SK-N-SH (cell line): ENCODE measurements at regions of chr11 and their contacts with region 1.

Region 1: DNA sequence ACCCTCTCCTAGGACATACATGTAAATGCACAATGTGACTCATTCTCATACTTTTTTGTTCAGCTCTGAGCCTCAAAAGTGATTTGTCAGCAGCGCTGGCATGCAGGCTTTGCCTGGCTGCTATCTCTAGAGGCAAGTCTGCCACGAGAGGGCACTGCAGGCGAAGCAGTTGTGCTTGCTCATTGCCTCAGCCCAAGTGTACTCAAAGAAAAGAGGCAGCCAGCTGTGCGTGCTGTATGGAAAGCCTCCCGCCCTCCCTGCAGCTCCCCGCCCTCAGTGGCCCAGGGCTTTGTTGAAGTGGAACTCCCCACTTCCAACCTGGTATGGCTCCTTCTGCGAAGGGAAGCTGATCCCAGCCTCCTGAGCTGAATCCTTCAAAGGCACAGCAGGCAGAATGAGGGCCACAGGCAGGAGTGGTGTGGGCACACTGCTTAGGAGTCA is 16.3 kb downstream of the SDHAF2 start:
- DNase-seq: peak; percentile 78
- H3K4me3 ChIP-seq: no peak overlapping the region; a peak in 1 of 4 replicates
- H3K27ac ChIP-seq: peak overlapping the region; percentile 45 to 53; a peak in 3 of 4 replicates
- H3K4me1 ChIP-seq: peaks cover 5 to 13% of the 10 kb centered on the region in 2 experiments; a peak in 2 of 4 replicates
- H3K27me3 ChIP-seq: no peaks in the 10 kb centered on the region
- CTCF ChIP-seq: peak; percentile 94
- EP300 ChIP-seq: no peak
- RAD21 ChIP-seq: peak; percentile 88

Region 2: GRCh38 chr11:61460474-61460881 is 14.2 kb after region 1 on chr11:
- CTCF ChIA-PET with region 1: interaction called, 35 read pairs
- POLR2A ChIA-PET with region 1: interaction called, 6 read pairs
- DNase-seq: no peak
- H3K4me3 ChIP-seq: no peak overlapping the region
- H3K27ac ChIP-seq: peak overlapping the region in 1 of 2 experiments; percentile 29; a peak in 1 of 4 replicates
- H3K4me1 ChIP-seq: peaks cover 3 to 12% of the 10 kb centered on the region in 2 experiments; a peak in 2 of 4 replicates
- H3K27me3 ChIP-seq: no peaks in the 10 kb centered on the region
- CTCF ChIP-seq: no peak
- EP300 ChIP-seq: no peak
- RAD21 ChIP-seq: no peak

Region 3: DNA sequence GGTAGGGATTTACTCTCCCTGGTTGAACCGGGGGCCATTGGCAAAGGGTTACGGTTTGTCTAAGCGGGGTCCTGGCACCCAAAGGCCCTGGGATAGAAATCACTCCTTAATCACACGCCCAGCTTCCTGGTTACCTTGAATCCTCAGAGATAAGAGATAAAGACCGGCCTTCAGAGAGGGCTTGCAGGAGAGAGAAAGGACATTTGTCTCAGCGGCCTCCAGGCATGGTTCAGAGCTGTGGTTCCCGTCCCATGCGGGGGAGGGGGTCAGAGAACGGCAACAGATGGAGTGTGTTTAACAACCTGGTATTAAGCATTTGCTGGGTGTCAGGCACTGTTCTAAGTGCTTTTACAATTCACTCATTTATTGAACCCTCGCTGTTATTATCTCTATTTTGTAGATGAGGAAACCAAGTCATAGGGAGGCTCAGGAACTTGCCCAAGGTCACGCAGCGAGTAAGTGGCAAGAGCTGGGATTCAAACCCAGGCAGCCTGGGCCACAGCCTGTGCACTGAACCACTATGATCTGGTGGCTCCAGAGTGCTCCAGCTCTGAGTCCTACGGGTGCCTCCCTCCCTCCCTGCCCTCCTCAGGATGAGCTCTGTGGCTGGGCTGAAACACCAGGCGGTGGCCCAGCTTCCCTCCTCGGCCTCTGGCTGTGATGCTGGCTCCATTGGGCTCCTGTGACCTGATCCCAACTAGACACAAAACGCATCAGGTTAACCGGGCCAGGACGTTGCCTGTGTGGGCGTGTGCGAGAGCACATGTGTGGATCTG is 80.9 kb after region 1 on chr11:
- CTCF ChIA-PET with region 1: interaction called, 117 read pairs
- POLR2A ChIA-PET with region 1: interaction called, 3 read pairs
- DNase-seq: peak; percentile 61
- H3K4me3 ChIP-seq: no peak overlapping the region
- H3K27ac ChIP-seq: peak overlapping the region in 1 of 2 experiments; percentile 91; a peak in 2 of 4 replicates
- H3K4me1 ChIP-seq: peaks cover 0 to 60% of the 10 kb centered on the region in 2 experiments; a peak in 2 of 4 replicates
- H3K27me3 ChIP-seq: peaks cover 15% of the 10 kb centered on the region; the same call in 1 of the 2 replicates
- CTCF ChIP-seq: no peak
- EP300 ChIP-seq: no peak; a peak in 1 of 4 replicates
- RAD21 ChIP-seq: no peak

Region 4: GRCh38 chr11:61627567-61628445 is 181.6 kb after region 1 on chr11:
- CTCF ChIA-PET with region 1: interaction called, 69 read pairs
- POLR2A ChIA-PET with region 1: no interaction called
- DNase-seq: peak; percentile 83
- H3K4me3 ChIP-seq: no peak overlapping the region; a peak in 1 of 4 replicates
- H3K27ac ChIP-seq: no peak overlapping the region; a peak in 1 of 4 replicates
- H3K4me1 ChIP-seq: peaks cover 0 to 15% of the 10 kb centered on the region in 2 experiments; a peak in 1 of 4 replicates
- H3K27me3 ChIP-seq: no peaks in the 10 kb centered on the region; the same call in 1 of the 2 replicates
- CTCF ChIP-seq: peak; percentile 87
- EP300 ChIP-seq: 0 out of 4 replicates have a peak, but pooled peaks of 1 of the 2 experiments have one; percentile 28
- RAD21 ChIP-seq: peak; percentile 94